Motor neuron (in vitro differentiated cells): ENCODE measurements at regions of chr1 and their contacts with region 1.

Region 1: DNA sequence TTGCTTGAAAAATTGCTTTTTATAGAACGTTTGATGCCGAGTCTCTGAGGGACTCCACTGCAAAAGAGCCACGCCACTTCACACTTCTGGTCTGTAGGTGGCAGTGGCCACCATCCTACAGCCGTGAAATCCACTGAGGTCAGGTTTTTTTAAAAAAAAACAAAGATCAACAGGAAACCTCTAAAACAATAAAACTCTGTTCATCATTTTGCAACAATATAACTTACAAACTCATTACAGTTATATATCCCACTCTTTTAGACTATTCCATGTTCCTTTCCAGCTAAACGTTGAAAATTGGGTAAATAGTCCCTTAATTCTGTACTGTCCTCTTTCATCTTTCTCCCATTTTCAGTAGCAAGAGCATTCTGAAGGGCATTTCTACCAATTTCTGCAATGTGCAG is 64.6 kb upstream of the FMN2 start:
- ATAC-seq: peak; percentile 53 to 80 (median 72)
- H3K4me3 ChIP-seq: no peak overlapping the region
- H3K27ac ChIP-seq: no peak overlapping the region
- H3K4me1 ChIP-seq: no peaks in the 10 kb centered on the region

Region 2: GRCh38 chr1:240149484-240150094 is 122.5 kb after region 1 on chr1:
- in situ Hi-C with region 1: loop called in 2 of 9 experiments (anchors 10 to 25 kb)
- ATAC-seq: peak in 3 of 8 experiments; percentile 36 to 52 (median 50)
- H3K4me3 ChIP-seq: no peak overlapping the region
- H3K27ac ChIP-seq: no peak overlapping the region
- H3K4me1 ChIP-seq: no peaks in the 10 kb centered on the region

Region 3: DNA sequence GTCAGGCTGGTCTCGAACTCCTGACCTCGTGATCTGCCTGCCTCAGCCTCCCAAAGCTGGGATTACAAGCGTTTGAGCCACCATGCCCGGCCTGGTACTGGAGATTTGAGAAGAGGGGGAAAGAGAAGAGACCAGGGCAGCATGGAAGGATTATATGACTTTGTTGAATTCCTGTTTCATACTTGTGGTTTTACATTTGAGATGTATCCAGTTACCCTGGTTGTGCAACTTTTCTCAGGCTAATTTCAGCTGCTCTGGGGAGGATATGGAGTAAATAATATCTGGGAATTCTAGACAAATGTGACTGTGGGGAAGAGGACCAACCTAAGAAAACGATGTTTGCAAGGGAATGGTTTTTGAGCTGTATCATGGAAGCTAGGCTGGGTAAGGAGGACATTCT is 674.4 kb after region 1 on chr1:
- in situ Hi-C with region 1: loop called in 4 of 9 experiments (anchors 25 kb)
- ATAC-seq: peak in 1 of 8 experiments; percentile 45
- H3K4me3 ChIP-seq: no peak overlapping the region
- H3K27ac ChIP-seq: no peak overlapping the region
- H3K4me1 ChIP-seq: peaks cover 0 to 7% of the 10 kb centered on the region in 2 donors